ENCODE measurements at regions of chr7 and their contacts with region 1.

Region 1: GRCh38 chr7:116525913-116526861 is 1.4 kb downstream of the CAV1 start:
- DNase-seq: peak; percentile 88
- ATAC-seq: peak; percentile 69
- H3K4me3 ChIP-seq: peak overlapping the region; percentile 72
- H3K27ac ChIP-seq: peak overlapping the region; percentile 97
- H3K4me1 ChIP-seq: peaks cover 11% of the 10 kb centered on the region
- H3K27me3 ChIP-seq: no peaks in the 10 kb centered on the region
- CTCF ChIP-seq: peak; percentile 87
- POLR2A ChIP-seq: peak; percentile 73
- RAD21 ChIP-seq: peak; percentile 78

Region 2: GRCh38 chr7:116138202-116138801 is 387.9 kb before region 1 on chr7:
- CTCF ChIA-PET with region 1: no interaction called
- POLR2A ChIA-PET with region 1: interaction called, 4 read pairs
- dilution Hi-C with region 1: no loop called
- in situ Hi-C with region 1: no loop called
- intact Hi-C with region 1: loop called (anchors 5 kb)
- DNase-seq: peak; percentile 83
- ATAC-seq: peak; percentile 90
- H3K4me3 ChIP-seq: no peak overlapping the region
- H3K27ac ChIP-seq: no peak overlapping the region
- H3K4me1 ChIP-seq: peaks cover 9% of the 10 kb centered on the region
- H3K27me3 ChIP-seq: no peaks in the 10 kb centered on the region
- CTCF ChIP-seq: peak; percentile 88
- POLR2A ChIP-seq: no peak
- RAD21 ChIP-seq: peak; percentile 84

Region 3: GRCh38 chr7:116258734-116259133 is 267.5 kb before region 1 on chr7:
- CTCF ChIA-PET with region 1: interaction called, 9 read pairs
- POLR2A ChIA-PET with region 1: interaction called, 4 read pairs
- dilution Hi-C with region 1: loop called (anchors 25 kb)
- in situ Hi-C with region 1: loop called (anchors 5 kb)
- intact Hi-C with region 1: loop called (anchors 1 kb)
- DNase-seq: peak; percentile 79
- ATAC-seq: peak; percentile 75
- H3K4me3 ChIP-seq: no peak overlapping the region
- H3K27ac ChIP-seq: peak overlapping the region; percentile 49; the same call in 1 of the 2 replicates
- H3K4me1 ChIP-seq: peaks cover 11% of the 10 kb centered on the region; the same call in 1 of the 2 replicates
- H3K27me3 ChIP-seq: no peaks in the 10 kb centered on the region
- CTCF ChIP-seq: peak; percentile 91
- POLR2A ChIP-seq: 0 out of 2 replicates have a peak, but pooled peaks have one; percentile 39
- RAD21 ChIP-seq: peak; percentile 95

Region 4: DNA sequence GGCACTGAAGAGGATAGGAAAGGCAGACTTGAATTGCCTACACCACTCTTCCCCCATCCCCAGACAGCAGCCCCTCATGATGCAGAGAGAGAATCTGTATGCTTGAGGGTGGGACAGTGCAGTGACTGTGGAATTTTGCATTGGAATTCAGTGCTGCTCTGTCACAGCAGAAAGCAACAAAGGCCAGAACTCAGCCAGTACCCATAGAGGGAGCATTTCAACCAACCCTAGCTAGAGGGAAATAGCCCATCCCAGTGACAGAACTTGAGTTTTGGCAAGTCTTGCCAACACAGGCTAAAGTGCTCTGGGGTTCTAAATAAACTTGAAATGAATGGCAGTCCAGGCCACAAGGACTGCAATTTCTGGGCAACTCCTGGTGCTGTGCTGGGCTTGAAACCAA is 235.4 kb before region 1 on chr7:
- CTCF ChIA-PET with region 1: no interaction called
- POLR2A ChIA-PET with region 1: no interaction called
- dilution Hi-C with region 1: no loop called
- in situ Hi-C with region 1: no loop called
- intact Hi-C with region 1: no loop called
- DNase-seq: no peak
- ATAC-seq: peak; percentile 70
- H3K4me3 ChIP-seq: no peak overlapping the region
- H3K27ac ChIP-seq: no peak overlapping the region
- H3K4me1 ChIP-seq: peaks cover 2% of the 10 kb centered on the region
- H3K27me3 ChIP-seq: no peaks in the 10 kb centered on the region
- CTCF ChIP-seq: no peak
- POLR2A ChIP-seq: no peak
- RAD21 ChIP-seq: no peak

Region 5: DNA sequence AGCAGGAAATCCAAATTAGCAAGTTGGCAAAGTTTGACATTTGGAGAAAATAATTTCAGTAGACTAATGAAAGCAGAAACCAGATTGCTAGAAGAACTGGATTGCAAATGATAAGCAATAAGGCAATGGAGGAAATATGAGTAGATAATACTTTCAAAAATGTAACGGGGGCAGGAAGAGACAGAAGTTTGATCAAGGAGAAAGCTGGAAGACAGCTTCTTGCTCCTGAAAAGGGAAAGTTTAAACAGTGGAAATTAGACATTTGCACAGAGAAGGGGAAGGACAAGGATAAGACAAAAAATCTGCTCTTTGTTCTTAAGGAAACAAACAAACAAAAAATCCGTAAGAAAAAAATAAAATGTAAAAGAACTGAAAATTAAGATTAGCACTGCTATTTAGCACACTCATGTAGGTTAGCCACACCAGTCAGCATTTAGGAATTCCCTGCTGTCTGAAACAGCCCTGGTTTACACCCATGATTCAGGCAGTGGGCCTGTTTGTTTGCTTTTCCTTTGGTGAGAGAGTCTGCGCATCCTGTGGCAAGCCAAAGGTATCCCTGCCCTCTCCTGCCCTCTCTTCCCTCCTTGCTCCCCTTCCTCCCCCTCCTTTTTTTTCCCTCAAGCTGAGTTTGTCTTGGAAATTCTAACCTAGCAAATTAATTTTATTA is 130.9 kb before region 1 on chr7:
- CTCF ChIA-PET with region 1: no interaction called
- POLR2A ChIA-PET with region 1: interaction called, 3 read pairs
- dilution Hi-C with region 1: no loop called
- in situ Hi-C with region 1: no loop called
- intact Hi-C with region 1: loop called (anchors 2 kb)
- DNase-seq: peak; percentile 94
- ATAC-seq: peak; percentile 97
- H3K4me3 ChIP-seq: no peak overlapping the region; the same call in 1 of the 2 replicates
- H3K27ac ChIP-seq: peak overlapping the region; percentile 30; the same call in 1 of the 2 replicates
- H3K4me1 ChIP-seq: peaks cover 7% of the 10 kb centered on the region
- H3K27me3 ChIP-seq: no peaks in the 10 kb centered on the region
- CTCF ChIP-seq: no peak
- POLR2A ChIP-seq: no peak
- RAD21 ChIP-seq: peak; percentile 24

Region 6: GRCh38 chr7:116543664-116544063 is 17.5 kb after region 1 on chr7:
- CTCF ChIA-PET with region 1: interaction called, 6 read pairs
- POLR2A ChIA-PET with region 1: interaction called, 11 read pairs
- dilution Hi-C with region 1: no loop called
- in situ Hi-C with region 1: no loop called
- intact Hi-C with region 1: no loop called
- DNase-seq: peak; percentile 74
- ATAC-seq: no peak
- H3K4me3 ChIP-seq: no peak overlapping the region
- H3K27ac ChIP-seq: peak overlapping the region; percentile 29; the same call in 1 of the 2 replicates
- H3K4me1 ChIP-seq: peaks cover 41% of the 10 kb centered on the region
- H3K27me3 ChIP-seq: no peaks in the 10 kb centered on the region
- CTCF ChIP-seq: no peak
- POLR2A ChIP-seq: no peak
- RAD21 ChIP-seq: no peak

Region 7: GRCh38 chr7:116809636-116810266 is 283.6 kb after region 1 on chr7:
- CTCF ChIA-PET with region 1: no interaction called
- POLR2A ChIA-PET with region 1: no interaction called
- dilution Hi-C with region 1: no loop called
- in situ Hi-C with region 1: no loop called
- intact Hi-C with region 1: loop called (anchors 5 kb)
- DNase-seq: peak; percentile 77
- ATAC-seq: peak; percentile 88
- H3K4me3 ChIP-seq: no peak overlapping the region
- H3K27ac ChIP-seq: no peak overlapping the region
- H3K4me1 ChIP-seq: peaks cover 6% of the 10 kb centered on the region
- H3K27me3 ChIP-seq: no peaks in the 10 kb centered on the region
- CTCF ChIP-seq: peak; percentile 79
- POLR2A ChIP-seq: no peak
- RAD21 ChIP-seq: peak; percentile 93

Measured in IMR-90 (cell line).